Activated CD4-positive, alpha-beta memory T cell treated with anti-CD3 and anti-CD28 coated beads for 36 hours (primary cell): ENCODE measurements at regions of chr3 and their contacts with region 1.

Region 1: GRCh38 chr3:25664810-25665314 is at the start of gene TOP2B:
- DNase-seq: peak; percentile 97
- H3K4me3 Mint-ChIP-seq: peak within 1 kb of the TSS; percentile 97
- H3K27ac Mint-ChIP-seq: peak within 1 kb of the TSS; percentile 99
- H3K4me1 Mint-ChIP-seq: peaks cover 40% of the 10 kb centered on the region
- H3K27me3 Mint-ChIP-seq: no peaks in the 10 kb centered on the region
- total RNA-seq, gene TOP2B: 133 to 134 TPM

Region 2: DNA sequence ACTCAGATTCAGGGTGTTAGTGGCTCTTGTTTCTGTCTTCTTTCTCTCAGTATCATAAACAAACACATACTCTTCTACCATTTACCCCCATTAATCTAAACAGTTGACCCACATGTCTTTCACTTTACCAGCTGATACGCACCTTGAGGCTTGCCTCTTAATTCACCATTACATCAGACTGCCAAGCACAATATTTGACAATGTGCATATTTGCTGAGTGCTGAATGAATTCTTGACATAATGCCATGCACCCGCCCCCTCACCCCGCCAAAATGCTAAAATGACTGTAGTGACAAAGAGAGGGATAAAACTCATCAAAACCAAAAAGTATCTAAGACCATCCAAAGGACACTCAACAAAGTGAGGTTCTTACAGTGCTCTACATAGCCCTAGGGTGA is 61.0 kb after region 1 on chr3:
- CTCF ChIA-PET with region 1: interaction called, 3 read pairs
- POLR2A ChIA-PET with region 1: no interaction called
- intact Hi-C with region 1: loop called (anchors 5 kb)
- DNase-seq: peak; percentile 16
- H3K4me3 Mint-ChIP-seq: no peak overlapping the region
- H3K27ac Mint-ChIP-seq: no peak overlapping the region
- H3K4me1 Mint-ChIP-seq: no peaks in the 10 kb centered on the region
- H3K27me3 Mint-ChIP-seq: no peaks in the 10 kb centered on the region

Region 3: DNA sequence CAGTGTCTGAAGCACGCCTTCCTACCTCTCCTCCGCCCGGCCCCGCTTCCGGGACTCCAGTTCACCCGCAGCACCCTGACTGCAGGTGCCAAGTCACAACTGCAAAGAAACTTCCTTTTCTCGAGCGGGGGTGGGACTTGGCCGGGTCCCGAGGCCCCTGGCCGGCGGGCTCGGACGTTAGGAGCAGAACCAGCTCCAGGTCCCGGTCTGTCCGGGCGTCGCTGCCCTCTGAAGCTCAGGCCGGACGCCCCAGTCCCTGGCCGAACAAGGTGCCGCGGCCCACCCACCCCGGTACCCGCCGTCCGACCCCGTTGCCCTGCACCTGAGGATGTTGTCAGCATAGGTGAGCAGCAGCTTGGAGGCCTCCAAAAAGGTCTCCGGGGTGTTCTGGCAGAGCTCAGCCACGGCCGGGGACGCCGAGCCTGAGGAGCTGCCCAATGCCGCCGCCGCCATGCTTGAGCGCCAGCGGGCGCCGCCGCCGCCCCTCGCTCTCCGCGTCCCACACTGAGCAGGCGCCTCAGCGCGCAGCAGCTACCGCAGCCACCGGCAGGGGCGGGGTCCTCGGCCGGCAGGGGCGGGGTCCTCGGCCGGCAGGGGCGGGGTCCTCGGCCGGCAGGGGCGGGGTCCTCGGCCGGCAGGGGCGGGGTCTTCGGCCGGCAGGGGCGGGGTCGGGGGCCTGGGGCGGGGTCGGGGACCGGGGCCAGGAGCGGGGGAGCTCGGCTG is 118.2 kb after region 1 on chr3 and contains the start of gene NGLY1:
- CTCF ChIA-PET with region 1: no interaction called
- POLR2A ChIA-PET with region 1: interaction called, 8 read pairs
- intact Hi-C with region 1: loop called (anchors 1 kb)
- DNase-seq: peak; percentile 89
- H3K4me3 Mint-ChIP-seq: peak within 1 kb of the TSS; percentile 87
- H3K27ac Mint-ChIP-seq: peak within 1 kb of the TSS; percentile 83
- H3K4me1 Mint-ChIP-seq: peaks cover 46% of the 10 kb centered on the region
- H3K27me3 Mint-ChIP-seq: no peaks in the 10 kb centered on the region
- total RNA-seq, gene NGLY1: 51.5 to 56.7 TPM

Region 4: DNA sequence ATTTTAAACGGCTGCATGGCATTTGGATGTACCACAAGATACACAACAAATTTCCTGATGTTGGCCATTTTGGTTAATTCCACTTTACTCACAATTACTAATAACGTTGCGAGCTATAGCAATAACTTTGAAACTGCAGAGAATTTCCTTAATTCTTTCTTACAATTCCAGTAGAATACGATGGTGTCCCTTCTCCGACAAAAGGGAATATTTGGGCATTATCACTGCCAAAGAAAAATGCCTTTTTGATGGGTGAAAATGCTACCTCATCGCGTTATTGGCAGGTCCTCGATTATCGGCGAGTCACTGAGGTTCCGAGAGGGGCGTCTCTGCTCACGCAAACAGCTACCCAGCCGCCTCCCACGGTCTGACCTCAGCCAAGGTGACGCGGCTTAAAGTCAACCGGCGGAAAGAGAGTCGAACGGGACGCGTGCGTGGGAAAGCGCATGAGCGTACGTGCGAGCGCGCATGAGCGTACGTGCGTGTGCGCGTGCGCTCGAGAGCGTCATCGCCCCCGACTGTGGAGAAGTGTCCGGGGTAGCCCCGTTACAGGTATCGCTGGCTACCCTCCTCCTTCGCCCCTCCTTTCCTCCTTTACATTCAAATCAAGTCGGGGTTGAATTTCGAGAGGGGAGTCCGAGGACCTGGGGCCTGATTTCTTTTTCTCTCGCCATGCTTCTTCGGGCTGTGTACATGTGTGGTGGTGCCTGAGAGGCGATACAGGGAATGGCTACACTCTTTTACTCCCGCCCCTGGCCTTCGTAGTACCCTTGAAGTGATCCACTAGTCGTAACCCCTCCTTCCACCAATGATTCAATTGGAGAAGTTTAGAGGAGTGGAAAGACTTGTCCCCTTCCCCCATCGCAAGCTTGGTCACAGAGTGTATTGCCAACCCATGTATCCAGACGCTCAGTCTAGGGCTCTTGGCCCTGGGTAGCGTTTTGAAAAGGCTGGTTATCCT is 125.0 kb after region 1 on chr3 and contains the start of gene OXSM:
- CTCF ChIA-PET with region 1: no interaction called
- POLR2A ChIA-PET with region 1: no interaction called
- intact Hi-C with region 1: loop called (anchors 1 kb)
- DNase-seq: peak; percentile 96
- H3K4me3 Mint-ChIP-seq: peak within 1 kb of the TSS; percentile 94
- H3K27ac Mint-ChIP-seq: peak within 1 kb of the TSS; percentile 92
- H3K4me1 Mint-ChIP-seq: peaks cover 44% of the 10 kb centered on the region
- H3K27me3 Mint-ChIP-seq: no peaks in the 10 kb centered on the region
- total RNA-seq, gene OXSM: 15.1 to 16.1 TPM

Region 5: GRCh38 chr3:25856902-25857518 is 192.1 kb after region 1 on chr3:
- CTCF ChIA-PET with region 1: interaction called, 4 read pairs
- POLR2A ChIA-PET with region 1: no interaction called
- intact Hi-C with region 1: loop called (anchors 5 kb)
- DNase-seq: no peak
- H3K4me3 Mint-ChIP-seq: no peak overlapping the region
- H3K27ac Mint-ChIP-seq: no peak overlapping the region
- H3K4me1 Mint-ChIP-seq: no peaks in the 10 kb centered on the region
- H3K27me3 Mint-ChIP-seq: no peaks in the 10 kb centered on the region

Region 6: DNA sequence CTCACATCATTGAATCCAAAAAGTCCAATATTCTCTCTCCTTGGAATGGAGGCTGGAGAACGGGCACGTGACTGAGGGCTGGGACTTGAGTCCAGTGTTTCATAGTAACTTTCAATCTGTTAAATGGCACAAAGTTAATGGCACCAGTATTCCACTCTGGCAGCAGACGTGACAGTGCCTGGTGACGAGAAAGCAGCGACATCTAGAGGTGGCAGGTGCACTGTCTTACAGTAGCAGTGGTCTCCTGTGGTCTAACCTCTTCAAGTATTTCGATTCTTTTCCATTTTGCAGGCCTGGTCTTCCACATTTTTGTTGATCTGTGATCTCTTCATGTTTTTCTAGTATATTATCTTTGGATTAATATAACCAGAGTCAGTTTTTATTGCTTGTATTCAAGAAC is 232.2 kb after region 1 on chr3:
- CTCF ChIA-PET with region 1: no interaction called
- POLR2A ChIA-PET with region 1: no interaction called
- intact Hi-C with region 1: no loop called
- DNase-seq: no peak
- H3K4me3 Mint-ChIP-seq: no peak overlapping the region
- H3K27ac Mint-ChIP-seq: no peak overlapping the region
- H3K4me1 Mint-ChIP-seq: peaks cover 13% of the 10 kb centered on the region
- H3K27me3 Mint-ChIP-seq: no peaks in the 10 kb centered on the region